ENCODE measurements at regions of chr3 and their contacts with region 1.

Region 1: DNA sequence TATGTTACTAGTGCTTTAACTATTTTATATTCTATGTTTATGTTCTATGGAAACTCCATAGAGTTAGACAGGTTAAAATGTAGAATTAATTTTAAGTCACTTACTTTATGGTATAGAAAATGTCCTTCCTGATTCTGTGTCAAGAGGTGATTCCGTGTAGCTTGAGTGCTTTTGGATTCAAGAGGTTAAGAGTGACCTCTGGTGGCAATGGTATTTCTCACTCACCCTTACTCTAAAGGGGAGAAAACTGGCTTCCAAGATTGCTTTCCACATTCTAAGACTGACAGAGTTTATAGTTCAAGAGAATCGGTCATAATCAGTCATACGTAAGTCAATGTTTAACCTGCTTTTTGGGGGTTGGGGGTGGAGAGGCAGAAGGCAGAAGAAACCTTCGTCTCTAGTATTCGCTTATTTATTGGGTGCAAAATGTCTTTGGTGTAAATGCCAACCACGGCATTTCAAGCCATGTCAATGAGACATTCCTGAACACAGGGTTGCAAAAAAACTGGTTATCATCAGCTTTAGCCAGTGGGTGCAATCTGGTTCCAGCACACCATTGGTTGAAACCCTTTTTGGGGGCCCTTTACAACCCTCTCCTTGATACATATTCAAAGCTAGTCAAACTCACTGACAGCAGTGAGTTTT is 92.0 kb upstream of the VGLL3 start:
- DNase-seq: no peak
- ATAC-seq: peak; percentile 90

Region 2: GRCh38 chr3:86774082-86774691 is 308.7 kb before region 1 on chr3:
- intact Hi-C with region 1: loop called (anchors 2 kb)
- DNase-seq: no peak
- ATAC-seq: no peak

Region 3: GRCh38 chr3:86785386-86785785 is 297.5 kb before region 1 on chr3:
- intact Hi-C with region 1: loop called (anchors 5 kb)
- DNase-seq: no peak
- ATAC-seq: peak; percentile 84

Region 4: GRCh38 chr3:86990734-86991481 is 92.0 kb before region 1 on chr3 and contains the start of gene VGLL3:
- intact Hi-C with region 1: loop called (anchors 10 kb)
- DNase-seq: peak; percentile 90
- ATAC-seq: peak; percentile 92
- total RNA-seq, gene VGLL3: 130 TPM